Naive thymus-derived CD4-positive, alpha-beta T cell (primary cell): ENCODE measurements at regions of chr9 and their contacts with region 1.

Region 1: GRCh38 chr9:21110708-21111576 is 30.7 kb downstream of the IFNW1 start:
- DNase-seq: peak in 7 of 9 donors; percentile 43 to 72 (median 62)
- ATAC-seq: peak; percentile 92
- H3K4me3 ChIP-seq: no peak overlapping the region
- H3K4me3 Mint-ChIP-seq: no peak overlapping the region
- H3K27ac ChIP-seq: no peak overlapping the region
- H3K27ac Mint-ChIP-seq: peak overlapping the region in 1 of 9 donors; percentile 51
- H3K4me1 ChIP-seq: no peaks in the 10 kb centered on the region
- H3K4me1 Mint-ChIP-seq: peaks cover 0 to 3% (median 0%) of the 10 kb centered on the region in 7 donors
- H3K27me3 ChIP-seq: no peaks in the 10 kb centered on the region
- H3K27me3 Mint-ChIP-seq: peaks cover 0 to 19% (median 0%) of the 10 kb centered on the region in 5 donors

Region 2: DNA sequence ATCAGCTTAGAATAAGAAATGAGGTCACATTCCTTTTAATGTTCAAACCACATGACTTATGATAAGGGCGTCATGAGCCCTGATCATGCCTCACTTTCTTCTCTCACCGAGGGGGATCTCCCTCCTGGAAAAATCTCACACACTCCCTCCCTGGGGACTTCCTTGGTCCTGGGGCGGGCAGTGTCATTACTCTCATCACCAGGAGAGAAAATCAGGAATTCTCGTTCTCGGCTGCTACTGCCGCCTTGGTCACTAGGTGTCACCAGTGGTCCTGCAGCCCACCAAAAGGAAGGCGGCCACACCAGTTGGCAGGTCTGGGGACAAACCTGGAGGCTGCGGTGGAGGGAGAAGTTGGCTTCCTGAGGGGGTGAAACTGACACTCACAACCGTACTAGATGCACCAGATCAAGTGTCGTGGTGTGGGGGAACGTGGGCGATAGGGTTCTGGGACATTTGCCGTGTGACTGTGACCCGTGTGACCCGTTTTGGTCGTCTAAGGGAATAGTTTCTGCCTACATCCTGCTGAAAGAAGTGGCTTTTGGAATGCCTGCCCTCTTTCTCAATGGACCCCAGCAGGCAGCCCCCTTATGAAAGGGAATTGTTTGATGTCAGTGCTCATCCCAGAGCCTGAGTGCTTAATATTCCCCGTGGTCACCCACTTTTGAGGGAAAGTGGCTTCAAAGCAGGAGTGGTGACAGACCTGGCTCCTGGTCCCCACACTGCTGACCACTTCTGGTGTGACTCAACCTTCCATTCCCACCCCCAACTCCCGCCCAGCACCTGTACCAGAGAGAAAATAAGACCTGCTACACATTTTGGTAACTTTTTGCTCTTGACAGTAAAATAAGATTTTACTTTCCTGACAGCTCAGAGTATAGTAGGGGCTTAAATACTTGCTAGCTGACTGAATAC is 1638.9 kb before region 1 on chr9:
- CTCF ChIA-PET with region 1: interaction called, 4 read pairs
- POLR2A ChIA-PET with region 1: no interaction called
- intact Hi-C with region 1: loop called in 1 of 2 experiments (anchors 2 kb)
- DNase-seq: peak in 7 of 9 donors; percentile 11 to 56 (median 33)
- ATAC-seq: peak; percentile 60
- H3K4me3 ChIP-seq: peak overlapping the region; percentile 39
- H3K4me3 Mint-ChIP-seq: peak overlapping the region; percentile 48 to 85 (median 75)
- H3K27ac ChIP-seq: no peak overlapping the region
- H3K27ac Mint-ChIP-seq: peak overlapping the region in 2 of 9 donors; percentile 36 to 65
- H3K4me1 ChIP-seq: no peaks in the 10 kb centered on the region
- H3K4me1 Mint-ChIP-seq: peaks cover 0 to 13% (median 4%) of the 10 kb centered on the region in 7 donors
- H3K27me3 ChIP-seq: no peaks in the 10 kb centered on the region
- H3K27me3 Mint-ChIP-seq: peaks cover 0 to 15% (median 0%) of the 10 kb centered on the region in 5 donors

Region 3: DNA sequence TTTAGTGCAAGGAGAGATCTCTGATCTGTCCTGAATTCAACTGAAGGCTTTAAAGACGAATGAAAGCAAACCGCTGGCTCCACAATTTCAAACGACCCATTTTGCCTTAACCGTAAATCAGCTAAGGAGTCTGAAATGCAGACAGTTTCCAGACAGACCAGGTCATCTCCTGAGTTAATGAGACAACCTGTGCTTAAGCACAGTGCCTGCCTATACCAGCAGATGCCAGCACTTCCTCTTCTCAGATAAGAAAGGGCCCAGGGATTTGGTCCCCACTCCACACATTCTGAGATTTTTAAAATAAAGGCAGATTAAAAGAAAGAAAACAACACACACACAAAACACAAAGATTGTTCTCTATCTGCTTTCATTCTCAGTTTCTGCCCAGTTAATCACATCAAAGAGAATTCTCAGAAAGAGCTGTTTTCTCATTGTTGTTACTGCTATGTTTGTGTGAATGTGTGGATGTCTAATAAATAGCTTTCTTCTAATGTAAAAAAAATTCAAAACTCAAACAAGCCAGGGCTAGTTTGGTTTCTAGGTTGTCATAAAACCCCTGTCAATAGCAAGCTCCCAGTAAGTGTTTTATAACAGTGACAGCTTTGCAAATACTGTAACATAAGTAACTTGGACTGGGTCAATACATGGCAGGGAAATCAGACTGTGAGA is 1164.4 kb before region 1 on chr9:
- CTCF ChIA-PET with region 1: interaction called, 7 read pairs
- POLR2A ChIA-PET with region 1: no interaction called
- intact Hi-C with region 1: loop called in 1 of 2 experiments (anchors 1 kb)
- DNase-seq: peak in 3 of 9 donors; percentile 5 to 35 (median 22)
- ATAC-seq: peak; percentile 57
- H3K4me3 ChIP-seq: no peak overlapping the region
- H3K4me3 Mint-ChIP-seq: no peak overlapping the region
- H3K27ac ChIP-seq: no peak overlapping the region
- H3K27ac Mint-ChIP-seq: peak overlapping the region in 4 of 9 donors; percentile 10 to 64 (median 34)
- H3K4me1 ChIP-seq: no peaks in the 10 kb centered on the region
- H3K4me1 Mint-ChIP-seq: peaks cover 2 to 24% (median 11%) of the 10 kb centered on the region in 7 donors
- H3K27me3 ChIP-seq: no peaks in the 10 kb centered on the region
- H3K27me3 Mint-ChIP-seq: peaks cover 0 to 14% (median 7%) of the 10 kb centered on the region in 5 donors

Region 4: GRCh38 chr9:20854444-20854843 is 256.5 kb before region 1 on chr9:
- CTCF ChIA-PET with region 1: no interaction called
- POLR2A ChIA-PET with region 1: no interaction called
- intact Hi-C with region 1: no loop called
- DNase-seq: no peak
- ATAC-seq: no peak
- H3K4me3 ChIP-seq: no peak overlapping the region
- H3K4me3 Mint-ChIP-seq: no peak overlapping the region
- H3K27ac ChIP-seq: no peak overlapping the region
- H3K27ac Mint-ChIP-seq: no peak overlapping the region
- H3K4me1 ChIP-seq: no peaks in the 10 kb centered on the region
- H3K4me1 Mint-ChIP-seq: peaks cover 0 to 5% (median 0%) of the 10 kb centered on the region in 7 donors
- H3K27me3 ChIP-seq: no peaks in the 10 kb centered on the region
- H3K27me3 Mint-ChIP-seq: peaks cover 0 to 3% (median 0%) of the 10 kb centered on the region in 5 donors

Region 5: GRCh38 chr9:20884985-20885593 is 225.9 kb before region 1 on chr9:
- CTCF ChIA-PET with region 1: interaction called, 20 read pairs
- POLR2A ChIA-PET with region 1: no interaction called
- intact Hi-C with region 1: loop called (anchors 1 kb)
- DNase-seq: peak in 8 of 9 donors; percentile 23 to 54 (median 43)
- ATAC-seq: peak; percentile 71
- H3K4me3 ChIP-seq: no peak overlapping the region
- H3K4me3 Mint-ChIP-seq: no peak overlapping the region
- H3K27ac ChIP-seq: no peak overlapping the region
- H3K27ac Mint-ChIP-seq: no peak overlapping the region
- H3K4me1 ChIP-seq: no peaks in the 10 kb centered on the region
- H3K4me1 Mint-ChIP-seq: no peaks in the 10 kb centered on the region
- H3K27me3 ChIP-seq: no peaks in the 10 kb centered on the region
- H3K27me3 Mint-ChIP-seq: no peaks in the 10 kb centered on the region

Region 6: DNA sequence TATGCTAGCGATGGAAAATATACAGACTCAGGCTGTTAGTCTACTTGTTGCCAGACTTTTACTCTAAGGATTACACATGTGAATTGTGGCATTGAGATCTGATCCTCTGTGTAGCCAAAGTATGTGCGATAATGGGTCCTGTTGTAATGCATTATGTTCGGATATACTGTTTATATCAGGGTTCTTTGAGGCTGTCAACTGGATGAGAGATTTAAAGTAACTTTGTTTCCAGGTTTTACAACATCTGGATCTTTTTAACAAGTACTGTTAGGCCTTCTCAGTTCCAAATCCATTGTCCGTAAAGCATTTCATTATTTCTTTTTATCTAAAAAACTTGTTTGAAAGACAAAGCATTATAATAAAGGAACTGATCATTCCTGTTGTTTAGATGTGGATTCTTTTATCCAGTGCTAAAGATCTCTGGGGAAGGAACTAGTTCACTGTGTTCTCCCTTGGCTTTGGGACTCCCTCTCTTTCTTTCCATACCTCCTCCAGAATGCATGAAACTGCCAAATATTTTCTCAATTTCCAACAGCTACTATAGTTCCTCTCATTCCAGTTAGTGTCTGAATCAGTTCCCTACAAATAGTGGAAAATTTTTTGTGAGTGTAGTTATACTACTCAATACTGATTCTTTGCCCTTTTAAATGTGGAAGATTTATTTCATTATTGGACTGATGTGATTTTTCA is 148.3 kb before region 1 on chr9:
- CTCF ChIA-PET with region 1: interaction called, 3 read pairs
- POLR2A ChIA-PET with region 1: no interaction called
- intact Hi-C with region 1: loop called in 1 of 2 experiments (anchors 5 kb)
- DNase-seq: no peak
- ATAC-seq: no peak
- H3K4me3 ChIP-seq: no peak overlapping the region
- H3K4me3 Mint-ChIP-seq: no peak overlapping the region
- H3K27ac ChIP-seq: no peak overlapping the region
- H3K27ac Mint-ChIP-seq: no peak overlapping the region
- H3K4me1 ChIP-seq: no peaks in the 10 kb centered on the region
- H3K4me1 Mint-ChIP-seq: peaks cover 0 to 3% (median 0%) of the 10 kb centered on the region in 7 donors
- H3K27me3 ChIP-seq: no peaks in the 10 kb centered on the region
- H3K27me3 Mint-ChIP-seq: no peaks in the 10 kb centered on the region

Region 7: DNA sequence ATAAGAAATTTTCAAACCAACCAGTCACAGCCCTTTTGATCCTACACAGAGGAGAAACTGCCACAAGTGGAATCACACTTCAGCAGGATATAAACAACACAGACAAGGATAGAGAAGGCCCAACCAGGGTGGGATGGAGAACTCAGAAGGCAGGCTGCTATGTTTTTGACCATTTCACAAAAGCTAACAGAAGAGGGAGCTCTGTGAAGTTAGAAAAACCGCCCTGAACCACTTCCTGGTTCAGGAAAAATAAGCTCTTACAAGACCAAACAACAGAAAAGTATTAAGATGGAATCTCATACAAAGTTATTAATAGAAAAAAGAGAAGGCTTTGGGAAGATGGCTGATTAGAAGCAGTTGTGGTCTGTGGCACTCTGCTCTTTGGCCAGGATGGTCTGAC is 32.2 kb before region 1 on chr9:
- CTCF ChIA-PET with region 1: interaction called, 34 read pairs
- POLR2A ChIA-PET with region 1: interaction called, 4 read pairs
- intact Hi-C with region 1: loop called (anchors 1 kb)
- DNase-seq: peak in 3 of 9 donors; percentile 2 to 19 (median 8)
- ATAC-seq: peak; percentile 42
- H3K4me3 ChIP-seq: no peak overlapping the region
- H3K4me3 Mint-ChIP-seq: peak overlapping the region in 1 of 10 donors; percentile 26
- H3K27ac ChIP-seq: no peak overlapping the region
- H3K27ac Mint-ChIP-seq: peak overlapping the region in 4 of 9 donors; percentile 15 to 42 (median 31)
- H3K4me1 ChIP-seq: peaks cover 0 to 18% of the 10 kb centered on the region in 2 donors
- H3K4me1 Mint-ChIP-seq: peaks cover 23 to 40% (median 35%) of the 10 kb centered on the region in 7 donors
- H3K27me3 ChIP-seq: no peaks in the 10 kb centered on the region
- H3K27me3 Mint-ChIP-seq: peaks cover 0 to 20% (median 0%) of the 10 kb centered on the region in 5 donors